ENCODE measurements at regions of chrX and their contacts with region 1.

Region 1: DNA sequence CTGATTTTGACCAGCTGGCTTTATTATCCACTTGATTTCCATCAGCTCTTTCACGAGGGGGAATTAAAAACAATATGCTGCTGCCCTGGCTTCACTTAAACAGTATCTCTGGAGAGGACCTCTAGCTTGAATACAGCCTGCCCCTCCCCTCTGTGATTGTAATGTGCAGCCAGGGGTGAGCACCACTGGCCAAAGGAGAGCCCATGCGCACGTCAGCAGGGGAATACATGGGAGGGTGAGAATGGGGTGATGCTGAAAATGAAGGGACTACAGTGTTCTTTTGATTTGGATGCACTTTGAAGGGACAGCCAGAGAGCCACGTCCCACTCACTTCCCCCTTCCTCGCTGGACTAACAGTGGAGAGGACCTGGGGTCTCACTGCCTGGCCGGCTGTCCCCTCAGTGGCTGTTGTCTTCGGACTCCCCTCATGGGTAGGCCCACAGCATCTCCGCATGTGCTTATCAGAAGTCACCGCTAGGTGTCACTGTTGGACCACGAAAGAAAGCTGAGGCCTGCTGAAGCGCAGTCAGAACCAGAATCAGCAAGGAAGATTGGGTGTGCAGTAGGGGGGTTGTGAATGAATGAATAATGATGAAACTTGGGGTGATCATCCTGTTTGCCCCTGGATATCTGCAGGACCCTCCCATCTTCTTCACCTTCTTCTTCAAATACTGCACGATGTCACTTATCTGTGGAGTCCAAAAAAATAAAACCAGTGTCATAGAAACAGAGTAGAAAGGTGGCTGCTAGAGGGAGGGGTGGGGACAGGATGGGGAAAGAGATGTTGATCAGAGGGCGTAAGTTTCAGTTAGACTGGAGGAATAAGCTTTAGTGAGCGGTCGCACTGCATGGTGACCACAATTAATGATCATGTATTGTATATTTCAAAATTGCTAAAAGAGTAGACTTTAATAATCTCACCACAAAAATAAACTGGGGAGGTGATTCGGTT is 32.8 kb downstream of the CLCN4 start:
- DNase-seq: peak; percentile 56 to 76
- H3K4me3 ChIP-seq: no peak overlapping the region
- H3K4me3 Mint-ChIP-seq: no peak overlapping the region
- H3K27ac Mint-ChIP-seq: peak overlapping the region; percentile 78
- H3K4me1 ChIP-seq: no peaks in the 10 kb centered on the region
- H3K4me1 Mint-ChIP-seq: peaks cover 8% of the 10 kb centered on the region
- H3K27me3 ChIP-seq: no peaks in the 10 kb centered on the region
- H3K27me3 Mint-ChIP-seq: no peaks in the 10 kb centered on the region
- CTCF ChIP-seq: peak; percentile 45 to 61

Region 2: GRCh38 chrX:10326578-10326977 is 137.0 kb after region 1 on chrX:
- CTCF ChIA-PET with region 1: no interaction called
- POLR2A ChIA-PET with region 1: no interaction called
- intact Hi-C with region 1: loop called (anchors 1 kb)
- DNase-seq: peak; percentile 50 to 54
- H3K4me3 ChIP-seq: no peak overlapping the region
- H3K4me3 Mint-ChIP-seq: no peak overlapping the region
- H3K27ac Mint-ChIP-seq: no peak overlapping the region
- H3K4me1 ChIP-seq: peaks cover 17% of the 10 kb centered on the region
- H3K4me1 Mint-ChIP-seq: no peaks in the 10 kb centered on the region
- H3K27me3 ChIP-seq: no peaks in the 10 kb centered on the region
- H3K27me3 Mint-ChIP-seq: no peaks in the 10 kb centered on the region
- CTCF ChIP-seq: peak; percentile 26 to 48

Region 3: DNA sequence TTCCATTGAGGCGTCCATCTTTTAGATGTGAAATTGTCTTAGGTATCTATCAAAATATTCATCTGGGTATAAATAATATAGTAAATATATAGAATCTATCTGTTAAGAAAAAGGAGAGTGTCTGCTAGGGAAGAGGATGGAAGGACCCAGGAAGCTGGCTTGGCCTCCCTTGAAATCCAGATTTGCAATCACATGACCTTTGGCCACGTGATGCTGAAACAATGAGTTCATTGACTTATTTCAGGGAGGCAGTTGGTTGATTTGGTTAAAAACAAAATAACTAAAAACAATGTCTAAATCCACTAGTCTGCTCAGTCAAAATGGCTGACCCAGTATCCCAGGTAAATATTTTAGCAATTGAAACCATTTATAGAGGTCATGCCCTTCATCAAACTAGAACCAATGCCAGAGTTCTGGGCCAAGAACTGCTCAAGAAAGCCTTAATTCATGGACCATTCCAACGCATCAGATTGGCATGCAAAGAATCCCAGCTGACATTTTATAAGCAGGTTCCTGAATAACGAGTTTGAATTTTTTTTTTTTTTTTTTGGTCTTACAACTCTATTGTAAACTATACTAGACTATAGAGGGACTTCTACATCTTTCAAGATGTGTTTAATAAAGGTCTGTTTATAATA is 258.1 kb after region 1 on chrX:
- CTCF ChIA-PET with region 1: no interaction called
- POLR2A ChIA-PET with region 1: no interaction called
- intact Hi-C with region 1: loop called (anchors 10 kb)
- DNase-seq: no peak
- H3K4me3 ChIP-seq: no peak overlapping the region
- H3K4me3 Mint-ChIP-seq: no peak overlapping the region
- H3K27ac Mint-ChIP-seq: no peak overlapping the region
- H3K4me1 ChIP-seq: no peaks in the 10 kb centered on the region
- H3K4me1 Mint-ChIP-seq: no peaks in the 10 kb centered on the region
- H3K27me3 ChIP-seq: no peaks in the 10 kb centered on the region
- H3K27me3 Mint-ChIP-seq: no peaks in the 10 kb centered on the region
- CTCF ChIP-seq: no peak

Region 4: DNA sequence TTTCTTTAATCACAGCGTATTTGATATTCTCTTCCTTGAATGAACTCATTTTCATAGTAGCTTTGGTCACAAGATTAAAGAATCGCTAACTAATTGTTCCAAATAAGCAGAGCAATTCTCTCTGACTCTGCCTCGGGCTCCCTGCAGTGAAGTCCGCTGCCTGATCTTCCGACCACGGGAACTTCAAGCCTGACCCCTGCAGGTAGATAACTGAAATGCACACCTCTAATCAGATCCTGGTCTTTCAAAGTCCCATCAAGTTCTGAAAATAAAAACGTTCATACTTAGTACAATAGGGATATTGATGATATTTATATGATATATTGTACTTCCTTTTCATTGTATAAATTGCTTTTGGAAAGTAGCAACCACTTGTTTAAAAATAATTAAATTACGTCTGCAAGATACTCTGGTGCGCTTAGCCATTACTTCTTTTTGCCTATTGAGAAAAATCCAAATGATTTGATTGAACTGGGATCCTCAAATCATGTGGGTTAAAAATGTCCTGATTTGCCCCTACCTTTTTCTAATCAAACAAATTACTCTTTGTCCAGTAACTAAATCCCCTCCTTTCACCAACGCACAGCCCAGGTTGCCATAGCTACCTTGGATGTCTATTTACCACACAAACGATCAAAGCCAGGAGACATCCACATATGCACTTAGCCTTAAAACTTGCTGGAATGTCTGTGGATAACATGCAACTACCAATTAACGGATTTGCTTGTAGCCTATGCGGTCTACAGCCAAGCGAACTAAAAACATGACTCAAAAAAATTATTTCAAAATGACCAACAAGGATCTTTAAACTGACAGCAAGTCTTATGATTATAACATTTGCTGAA is 426.6 kb after region 1 on chrX:
- CTCF ChIA-PET with region 1: no interaction called
- POLR2A ChIA-PET with region 1: no interaction called
- intact Hi-C with region 1: loop called (anchors 5 kb)
- DNase-seq: peak; percentile 42 to 49
- H3K4me3 ChIP-seq: no peak overlapping the region
- H3K4me3 Mint-ChIP-seq: peak overlapping the region; percentile 68
- H3K27ac Mint-ChIP-seq: peak overlapping the region; percentile 76
- H3K4me1 ChIP-seq: peaks cover 50% of the 10 kb centered on the region
- H3K4me1 Mint-ChIP-seq: peaks cover 11% of the 10 kb centered on the region
- H3K27me3 ChIP-seq: no peaks in the 10 kb centered on the region
- H3K27me3 Mint-ChIP-seq: no peaks in the 10 kb centered on the region
- CTCF ChIP-seq: peak; percentile 39 to 67

Region 5: DNA sequence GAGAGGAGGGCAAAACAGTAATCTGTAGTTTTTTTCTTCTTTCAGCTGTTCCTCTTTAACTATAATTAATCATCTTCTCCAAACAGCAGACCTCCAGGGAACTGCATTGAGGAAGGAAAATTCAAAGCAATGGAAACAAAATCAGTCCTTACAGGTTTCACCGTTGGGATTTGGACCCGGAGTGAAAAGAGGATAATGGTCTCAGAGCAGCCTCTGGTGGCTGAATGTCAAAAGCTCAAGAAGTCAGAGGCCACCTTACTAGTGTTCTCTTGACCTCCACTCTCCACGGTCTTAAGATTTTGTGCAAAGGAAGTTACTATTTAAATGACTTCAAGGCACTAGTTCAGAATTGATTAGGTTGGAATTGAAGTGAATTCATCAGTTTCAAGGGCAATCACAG is 446.7 kb after region 1 on chrX:
- CTCF ChIA-PET with region 1: interaction called, 3 read pairs
- POLR2A ChIA-PET with region 1: no interaction called
- intact Hi-C with region 1: loop called (anchors 1 kb)
- DNase-seq: peak in 1 of 2 experiments; percentile 51
- H3K4me3 ChIP-seq: no peak overlapping the region
- H3K4me3 Mint-ChIP-seq: no peak overlapping the region
- H3K27ac Mint-ChIP-seq: no peak overlapping the region
- H3K4me1 ChIP-seq: peaks cover 8% of the 10 kb centered on the region
- H3K4me1 Mint-ChIP-seq: no peaks in the 10 kb centered on the region
- H3K27me3 ChIP-seq: no peaks in the 10 kb centered on the region
- H3K27me3 Mint-ChIP-seq: no peaks in the 10 kb centered on the region
- CTCF ChIP-seq: peak; percentile 39 to 59

Region 6: DNA sequence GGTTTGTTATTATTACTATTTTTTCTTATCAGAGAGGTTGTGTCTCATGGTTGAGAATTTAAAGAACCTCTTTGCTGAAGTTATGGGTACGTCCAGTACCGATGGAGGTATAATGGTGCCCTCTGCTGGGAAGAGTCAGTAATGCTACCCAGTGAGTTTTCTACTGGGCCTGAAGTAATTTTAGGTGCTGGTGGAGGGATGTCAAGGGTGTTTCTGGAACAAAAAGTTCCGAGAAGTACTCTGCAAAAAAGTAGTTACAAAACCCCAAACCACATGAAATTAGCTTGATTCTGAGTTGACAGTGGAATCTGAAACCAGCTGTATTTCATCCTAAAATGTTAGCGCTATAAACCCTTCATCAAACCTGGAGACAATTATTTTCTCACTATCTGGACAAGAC is 533.3 kb after region 1 on chrX:
- CTCF ChIA-PET with region 1: interaction called, 3 read pairs
- POLR2A ChIA-PET with region 1: no interaction called
- intact Hi-C with region 1: loop called (anchors 5 kb)
- DNase-seq: peak; percentile 45 to 56
- H3K4me3 ChIP-seq: no peak overlapping the region
- H3K4me3 Mint-ChIP-seq: no peak overlapping the region
- H3K27ac Mint-ChIP-seq: no peak overlapping the region
- H3K4me1 ChIP-seq: no peaks in the 10 kb centered on the region
- H3K4me1 Mint-ChIP-seq: no peaks in the 10 kb centered on the region
- H3K27me3 ChIP-seq: no peaks in the 10 kb centered on the region
- H3K27me3 Mint-ChIP-seq: no peaks in the 10 kb centered on the region
- CTCF ChIP-seq: peak; percentile 62 to 65